ENCODE measurements at regions of chr1 and their contacts with region 1.

Region 1: DNA sequence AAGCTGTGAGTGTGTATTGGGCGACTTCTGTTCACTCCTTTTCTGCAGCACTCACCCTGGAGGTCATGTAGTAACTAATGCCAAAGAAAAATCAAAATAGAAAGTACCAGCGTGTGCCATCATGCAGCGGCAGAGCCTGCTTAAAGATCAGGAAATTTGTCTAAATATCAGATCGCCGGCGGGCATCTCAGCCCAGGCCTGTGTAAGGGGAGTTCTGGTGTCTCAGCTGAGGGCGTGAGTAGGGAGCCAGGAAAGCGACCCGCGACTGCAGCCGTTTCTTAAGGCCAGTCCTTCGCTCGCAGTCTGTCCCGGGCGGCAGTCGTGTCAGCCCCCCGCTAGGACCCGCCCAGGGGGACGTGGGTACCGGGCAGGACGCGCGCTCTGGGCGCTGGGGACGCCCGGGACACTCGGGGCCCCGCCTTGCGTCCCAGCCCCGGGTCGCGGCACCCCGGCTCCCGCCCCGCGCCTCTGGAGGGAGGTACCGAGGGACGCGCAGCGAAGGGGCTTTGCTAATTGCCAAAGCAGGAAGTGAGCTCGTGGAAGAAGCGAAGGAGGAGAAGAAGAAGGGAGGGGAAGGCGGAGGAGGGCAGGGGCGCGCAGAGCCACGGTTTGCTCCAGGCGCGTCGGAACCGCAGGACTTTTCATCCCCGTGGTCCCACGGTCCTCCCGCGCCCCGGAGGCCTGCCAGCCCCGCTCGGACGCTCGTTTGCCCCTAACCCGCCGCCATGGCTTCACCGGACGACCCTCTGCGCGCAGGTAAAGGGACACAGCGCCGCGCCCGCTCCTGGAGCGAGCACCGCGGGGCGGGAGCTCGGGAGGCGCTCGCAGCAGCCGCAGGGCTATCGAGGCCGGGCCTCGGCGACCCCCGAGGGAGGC is 1.1 kb downstream of the EDARADD start:
- DNase-seq: peak; percentile 66
- H3K4me3 Mint-ChIP-seq: peak overlapping the region; percentile 82
- H3K27ac Mint-ChIP-seq: peak overlapping the region; percentile 86
- H3K4me1 Mint-ChIP-seq: peaks cover 31% of the 10 kb centered on the region
- H3K27me3 Mint-ChIP-seq: peaks cover 19% of the 10 kb centered on the region

Region 2: DNA sequence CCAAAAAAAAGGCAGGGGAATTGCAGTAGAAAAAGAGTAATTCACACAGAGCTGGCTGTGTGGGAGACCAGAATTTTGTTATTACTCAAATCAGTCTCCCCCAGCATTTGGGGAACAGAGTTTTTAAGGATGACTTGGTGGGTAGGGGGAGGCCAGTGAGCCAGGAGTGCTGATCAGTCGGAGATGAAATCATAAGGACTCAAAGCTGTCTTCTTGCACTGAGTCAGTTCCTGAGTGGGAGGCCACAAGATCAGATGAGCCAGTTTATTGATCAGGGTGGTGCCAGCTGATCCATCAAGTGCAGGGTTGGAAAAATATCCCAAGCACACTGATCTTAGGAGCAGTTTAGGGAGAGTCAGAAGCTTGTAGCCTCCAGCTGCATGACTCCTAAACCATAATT is 24.7 kb before region 1 on chr1:
- CTCF ChIA-PET with region 1: no interaction called
- POLR2A ChIA-PET with region 1: interaction called, 4 read pairs
- intact Hi-C with region 1: loop called (anchors 1 kb)
- DNase-seq: peak; percentile 65
- H3K4me3 Mint-ChIP-seq: no peak overlapping the region
- H3K27ac Mint-ChIP-seq: peak overlapping the region; percentile 3
- H3K4me1 Mint-ChIP-seq: peaks cover 20% of the 10 kb centered on the region
- H3K27me3 Mint-ChIP-seq: no peaks in the 10 kb centered on the region

Region 3: GRCh38 chr1:236416165-236416564 is 21.0 kb after region 1 on chr1:
- CTCF ChIA-PET with region 1: interaction called, 4 read pairs
- POLR2A ChIA-PET with region 1: interaction called, 3 read pairs
- intact Hi-C with region 1: loop called (anchors 2 kb)
- DNase-seq: peak; percentile 24
- H3K4me3 Mint-ChIP-seq: peak overlapping the region; percentile 55
- H3K27ac Mint-ChIP-seq: peak overlapping the region; percentile 76
- H3K4me1 Mint-ChIP-seq: peaks cover 15% of the 10 kb centered on the region
- H3K27me3 Mint-ChIP-seq: no peaks in the 10 kb centered on the region

Region 4: GRCh38 chr1:236523701-236524141 is 128.6 kb after region 1 on chr1 and contains the start of gene LGALS8:
- CTCF ChIA-PET with region 1: no interaction called
- POLR2A ChIA-PET with region 1: no interaction called
- intact Hi-C with region 1: loop called (anchors 5 kb)
- DNase-seq: peak; percentile 94
- H3K4me3 Mint-ChIP-seq: peak within 1 kb of the TSS; percentile 97
- H3K27ac Mint-ChIP-seq: peak within 1 kb of the TSS; percentile 98
- H3K4me1 Mint-ChIP-seq: peaks cover 23% of the 10 kb centered on the region
- H3K27me3 Mint-ChIP-seq: no peaks in the 10 kb centered on the region
- total RNA-seq, gene LGALS8: 83.7 to 88.3 TPM

Region 5: DNA sequence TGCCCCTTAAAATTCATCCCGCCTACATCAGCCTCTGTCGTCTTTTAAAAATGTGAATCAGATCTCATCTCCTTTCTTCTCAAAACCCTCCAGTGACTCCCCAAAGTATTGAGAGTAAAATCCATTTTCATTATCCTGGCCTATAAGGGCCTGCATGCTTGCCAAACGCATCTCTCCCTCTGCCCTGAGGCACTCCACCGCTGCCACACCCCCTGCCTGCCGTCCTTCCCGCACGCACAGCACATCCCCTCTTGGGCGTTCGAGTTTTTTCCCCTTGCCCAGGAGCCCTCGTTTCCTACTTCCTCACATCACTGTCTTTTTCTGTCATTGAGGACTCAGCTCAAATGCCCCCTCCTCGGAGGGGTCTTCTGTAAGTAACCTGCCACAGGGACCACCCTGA is 346.6 kb after region 1 on chr1:
- CTCF ChIA-PET with region 1: no interaction called
- POLR2A ChIA-PET with region 1: no interaction called
- intact Hi-C with region 1: no loop called
- DNase-seq: no peak
- H3K4me3 Mint-ChIP-seq: no peak overlapping the region
- H3K27ac Mint-ChIP-seq: no peak overlapping the region
- H3K4me1 Mint-ChIP-seq: no peaks in the 10 kb centered on the region
- H3K27me3 Mint-ChIP-seq: peaks cover 2% of the 10 kb centered on the region